ENCODE measurements at regions of chrX and their contacts with region 1.

Region 1: DNA sequence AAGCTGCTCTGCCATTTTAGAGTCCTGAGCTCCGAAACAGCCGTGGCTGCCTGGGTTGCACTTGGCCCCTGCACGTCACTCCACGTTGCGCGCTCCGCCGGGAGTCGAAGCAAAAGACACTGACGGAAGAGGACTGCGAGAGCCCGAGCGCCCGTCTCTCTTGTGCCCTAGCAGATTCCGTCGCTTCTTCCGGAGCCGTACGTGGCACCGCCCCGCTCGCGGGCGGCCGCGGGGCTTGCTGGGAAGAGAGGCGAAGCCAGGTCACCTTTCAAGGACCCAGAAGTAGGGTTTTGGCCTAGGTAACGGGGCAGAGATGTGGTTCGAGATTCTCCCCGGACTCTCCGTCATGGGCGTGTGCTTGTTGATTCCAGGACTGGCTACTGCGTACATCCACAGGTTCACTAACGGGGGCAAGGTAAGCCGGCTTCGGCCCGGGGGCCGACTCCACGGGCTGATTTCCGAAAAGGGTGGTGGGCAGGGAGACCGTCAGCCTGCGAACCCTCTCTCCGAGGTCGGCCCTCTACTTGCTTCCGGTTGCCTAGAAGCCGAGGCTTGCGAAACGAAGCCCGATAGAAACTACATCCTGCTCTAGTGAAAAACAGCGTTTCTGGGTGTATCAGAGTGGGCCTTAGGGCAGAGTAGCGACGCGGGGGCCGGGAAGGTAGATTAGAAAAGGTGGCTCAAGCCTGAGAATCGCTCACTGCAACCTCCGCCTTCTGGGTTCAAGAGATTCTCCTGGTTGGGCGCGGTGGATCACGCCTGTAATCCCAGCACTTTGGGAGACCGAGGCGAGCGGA is at the starts of genes NDUFA1 and RNF113A:
- DNase-seq: peak; percentile 85
- H3K4me3 Mint-ChIP-seq: peak within 1 kb of the TSS; percentile 99
- H3K27ac Mint-ChIP-seq: peak within 1 kb of the TSS; percentile 100
- H3K4me1 Mint-ChIP-seq: peaks cover 5% of the 10 kb centered on the region
- H3K27me3 Mint-ChIP-seq: no peaks in the 10 kb centered on the region
- total RNA-seq, gene NDUFA1: 71.2 and 72.8 TPM in 2 replicates
- total RNA-seq, gene RNF113A: 28.8 and 29.7 TPM in 2 replicates

Region 2: GRCh38 chrX:119468930-119469635 is 402.7 kb before region 1 on chrX:
- intact Hi-C with region 1: loop called (anchors 2 kb)
- DNase-seq: peak; percentile 83
- H3K4me3 Mint-ChIP-seq: peak overlapping the region; percentile 90
- H3K27ac Mint-ChIP-seq: peak overlapping the region; percentile 93
- H3K4me1 Mint-ChIP-seq: peaks cover 12% of the 10 kb centered on the region
- H3K27me3 Mint-ChIP-seq: no peaks in the 10 kb centered on the region

Region 3: DNA sequence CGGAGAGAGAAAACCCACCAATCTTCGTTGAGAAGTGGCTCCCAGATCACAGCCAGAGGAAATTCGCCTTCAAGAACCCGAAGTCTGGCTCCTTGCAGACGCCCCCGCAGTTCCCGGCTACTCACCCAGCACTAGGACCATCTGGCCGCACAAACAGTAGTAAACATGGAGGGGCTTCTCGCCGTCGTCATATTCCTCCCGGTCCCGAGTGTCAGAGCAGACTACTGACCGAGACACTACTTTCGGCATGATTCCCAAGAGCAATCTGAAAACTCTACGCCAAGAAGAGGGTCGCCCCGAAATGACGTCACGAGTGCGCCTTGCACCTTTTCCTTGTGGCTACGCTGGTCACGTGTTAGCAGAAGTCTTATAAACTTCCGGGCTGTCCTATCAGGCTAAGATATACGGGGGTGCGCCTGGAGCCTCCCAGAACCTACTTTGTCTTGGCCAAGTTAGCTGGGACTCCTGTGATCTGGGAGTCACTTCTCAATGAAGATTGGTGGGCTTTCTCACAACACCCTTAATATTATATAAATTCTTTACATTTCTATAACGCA is 306.6 kb before region 1 on chrX and contains the start of gene STEEP1:
- intact Hi-C with region 1: loop called (anchors 1 kb)
- DNase-seq: peak; percentile 80
- H3K4me3 Mint-ChIP-seq: peak within 1 kb of the TSS; percentile 93
- H3K27ac Mint-ChIP-seq: peak within 1 kb of the TSS; percentile 92
- H3K4me1 Mint-ChIP-seq: peaks cover 15% of the 10 kb centered on the region
- H3K27me3 Mint-ChIP-seq: peaks cover 2% of the 10 kb centered on the region
- total RNA-seq, gene STEEP1: 25.0 and 25.9 TPM in 2 replicates

Region 4: DNA sequence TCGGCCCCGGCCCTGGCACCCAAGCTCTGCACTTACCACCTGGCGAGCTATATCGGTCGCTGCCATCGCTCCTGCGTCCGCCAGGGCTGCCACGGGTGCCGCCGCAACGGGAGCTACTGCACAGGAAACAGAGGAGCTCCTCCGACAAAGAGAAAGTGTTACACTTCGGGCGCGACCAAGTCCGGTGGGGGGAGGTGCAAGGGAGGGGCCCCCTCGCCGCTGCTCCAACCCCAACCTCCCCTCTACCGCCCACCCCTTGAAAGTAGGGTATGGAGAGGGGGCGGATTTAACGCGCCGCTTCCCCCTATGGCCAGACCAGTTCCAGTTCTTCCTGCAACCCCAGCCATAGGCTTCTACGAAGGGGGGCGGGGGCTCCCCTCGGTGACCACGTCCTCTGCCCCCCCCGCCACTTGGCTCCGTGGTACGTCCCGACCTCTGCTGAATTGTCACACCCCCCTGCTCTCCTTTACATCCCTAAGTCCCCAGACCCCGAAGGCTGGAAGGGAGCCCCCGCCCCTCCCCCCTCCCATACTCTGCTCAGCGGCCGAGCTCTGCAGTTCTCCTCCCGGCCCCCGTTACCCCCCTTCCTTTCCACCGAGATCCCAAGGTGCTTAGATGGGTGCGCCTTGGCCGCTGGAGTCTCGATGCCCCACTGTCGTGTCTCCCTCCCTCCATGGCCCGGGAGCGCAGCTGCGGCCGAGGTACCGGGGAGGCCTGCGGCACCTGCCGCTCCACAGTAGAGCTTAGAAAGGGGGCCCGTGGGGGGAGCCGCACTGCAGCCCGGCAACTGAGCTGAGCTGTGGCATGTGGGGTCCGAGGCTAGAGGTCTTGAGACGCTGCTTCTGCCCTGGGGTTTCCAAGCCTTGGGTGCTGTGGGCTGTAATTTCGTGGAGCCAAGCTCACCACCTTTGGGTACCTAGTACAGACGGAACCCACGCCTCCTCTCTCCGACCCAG is 178.5 kb before region 1 on chrX and contains the start of gene SEPTIN6:
- intact Hi-C with region 1: loop called (anchors 2 kb)
- DNase-seq: peak; percentile 78
- H3K4me3 Mint-ChIP-seq: peak within 1 kb of the TSS; percentile 93
- H3K27ac Mint-ChIP-seq: peak within 1 kb of the TSS; percentile 94
- H3K4me1 Mint-ChIP-seq: peaks cover 6% of the 10 kb centered on the region
- H3K27me3 Mint-ChIP-seq: peaks cover 2% of the 10 kb centered on the region
- total RNA-seq, gene SEPTIN6: 159 and 172 TPM in 2 replicates

Region 5: DNA sequence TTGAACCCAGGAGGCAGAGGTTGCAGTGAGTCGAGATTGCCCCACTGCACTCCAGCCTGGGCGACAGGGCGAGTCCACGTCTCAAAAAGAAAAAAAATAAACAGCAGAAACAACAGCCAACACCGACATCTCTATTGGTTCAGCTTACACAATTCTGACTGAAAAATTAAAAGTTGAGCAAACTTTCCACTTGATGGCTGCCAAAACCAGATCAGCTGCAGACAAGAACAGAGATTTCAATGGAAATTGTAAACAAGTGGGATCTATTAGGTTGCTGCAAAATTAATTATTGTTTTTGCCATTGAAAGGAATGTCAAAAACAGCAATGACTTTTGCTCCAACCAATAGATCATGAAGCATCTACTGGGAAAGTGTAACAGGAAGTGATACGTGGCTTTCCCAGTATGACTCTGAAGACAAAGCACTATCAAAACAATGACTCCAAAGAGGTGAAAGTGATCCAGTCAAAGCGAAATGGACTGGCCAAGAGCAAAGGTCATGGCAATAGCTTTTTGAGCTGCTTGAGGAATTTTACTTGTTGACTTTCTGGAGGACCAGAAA is 45.3 kb before region 1 on chrX:
- intact Hi-C with region 1: loop called (anchors 2 kb)
- DNase-seq: peak; percentile 0
- H3K4me3 Mint-ChIP-seq: no peak overlapping the region
- H3K27ac Mint-ChIP-seq: no peak overlapping the region
- H3K4me1 Mint-ChIP-seq: peaks cover 10% of the 10 kb centered on the region
- H3K27me3 Mint-ChIP-seq: no peaks in the 10 kb centered on the region

Region 6: DNA sequence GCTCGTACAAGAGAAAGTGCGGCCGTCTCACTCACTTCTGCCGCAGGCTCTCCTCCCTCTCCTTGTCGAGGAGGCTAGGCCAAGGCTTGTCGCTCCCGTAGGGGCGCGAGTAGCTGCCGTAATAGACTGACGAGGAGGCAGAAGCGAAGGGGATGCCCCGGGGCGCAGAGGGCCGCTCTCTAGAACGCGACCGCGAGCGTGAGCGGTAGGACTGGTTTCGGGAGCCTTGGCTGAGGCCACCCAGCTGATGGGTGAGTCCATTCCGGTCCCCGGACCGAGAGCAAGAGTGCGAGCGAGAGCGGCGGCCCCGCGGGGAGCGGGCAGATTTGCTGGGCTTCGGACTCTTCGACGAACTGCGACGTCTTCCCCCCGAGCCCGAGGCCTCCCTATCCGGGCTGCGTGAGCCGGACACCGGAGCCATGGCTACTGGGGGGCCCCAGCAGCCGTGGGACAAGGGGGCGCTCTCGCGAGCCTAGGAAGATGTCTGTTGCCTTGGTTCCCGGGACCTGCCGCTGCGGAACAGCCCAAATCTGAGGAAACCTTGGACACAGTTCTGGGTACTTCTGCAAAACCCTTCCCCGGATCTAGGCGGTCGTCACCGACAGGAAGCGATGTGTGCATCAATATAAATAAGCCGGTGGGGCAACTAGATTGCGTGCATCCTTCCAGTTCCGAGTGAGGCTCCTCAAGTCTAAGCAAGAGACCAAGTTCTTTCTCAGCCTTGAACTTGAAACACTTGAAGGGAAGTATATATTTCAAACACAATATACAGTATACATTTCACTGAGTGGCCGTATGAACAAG is 71.6 kb after region 1 on chrX and contains the start of gene NKAP:
- intact Hi-C with region 1: loop called (anchors 1 kb)
- DNase-seq: peak; percentile 78
- H3K4me3 Mint-ChIP-seq: peak within 1 kb of the TSS; percentile 93
- H3K27ac Mint-ChIP-seq: peak within 1 kb of the TSS; percentile 97
- H3K4me1 Mint-ChIP-seq: peaks cover 16% of the 10 kb centered on the region
- H3K27me3 Mint-ChIP-seq: peaks cover 2% of the 10 kb centered on the region
- total RNA-seq, gene NKAP: 9.4 and 10.1 TPM in 2 replicates

Region 7: GRCh38 chrX:120560842-120561633 is 689.2 kb after region 1 on chrX and contains the start of gene CUL4B:
- intact Hi-C with region 1: loop called (anchors 2 kb)
- DNase-seq: peak; percentile 89
- H3K4me3 Mint-ChIP-seq: peak within 1 kb of the TSS; percentile 99
- H3K27ac Mint-ChIP-seq: peak within 1 kb of the TSS; percentile 97
- H3K4me1 Mint-ChIP-seq: peaks cover 30% of the 10 kb centered on the region
- H3K27me3 Mint-ChIP-seq: no peaks in the 10 kb centered on the region
- total RNA-seq, gene CUL4B: 25.2 and 26.5 TPM in 2 replicates